Activated T-helper 1 cell treated with anti-CD3 and anti-CD28 coated beads, Interleukin-12 subunit alpha, Interleukin-12 subunit beta, Interleukin-2, Interleukin-4 antibody, amounts not matched to agents 30 ng/mL and 10 ng/mL and 1 ng/mL, durations not matched to agents 14 hours and 24 hours and 36 hours (primary cell): ENCODE measurements at regions of chr1 and their contacts with region 1.

Region 1: DNA sequence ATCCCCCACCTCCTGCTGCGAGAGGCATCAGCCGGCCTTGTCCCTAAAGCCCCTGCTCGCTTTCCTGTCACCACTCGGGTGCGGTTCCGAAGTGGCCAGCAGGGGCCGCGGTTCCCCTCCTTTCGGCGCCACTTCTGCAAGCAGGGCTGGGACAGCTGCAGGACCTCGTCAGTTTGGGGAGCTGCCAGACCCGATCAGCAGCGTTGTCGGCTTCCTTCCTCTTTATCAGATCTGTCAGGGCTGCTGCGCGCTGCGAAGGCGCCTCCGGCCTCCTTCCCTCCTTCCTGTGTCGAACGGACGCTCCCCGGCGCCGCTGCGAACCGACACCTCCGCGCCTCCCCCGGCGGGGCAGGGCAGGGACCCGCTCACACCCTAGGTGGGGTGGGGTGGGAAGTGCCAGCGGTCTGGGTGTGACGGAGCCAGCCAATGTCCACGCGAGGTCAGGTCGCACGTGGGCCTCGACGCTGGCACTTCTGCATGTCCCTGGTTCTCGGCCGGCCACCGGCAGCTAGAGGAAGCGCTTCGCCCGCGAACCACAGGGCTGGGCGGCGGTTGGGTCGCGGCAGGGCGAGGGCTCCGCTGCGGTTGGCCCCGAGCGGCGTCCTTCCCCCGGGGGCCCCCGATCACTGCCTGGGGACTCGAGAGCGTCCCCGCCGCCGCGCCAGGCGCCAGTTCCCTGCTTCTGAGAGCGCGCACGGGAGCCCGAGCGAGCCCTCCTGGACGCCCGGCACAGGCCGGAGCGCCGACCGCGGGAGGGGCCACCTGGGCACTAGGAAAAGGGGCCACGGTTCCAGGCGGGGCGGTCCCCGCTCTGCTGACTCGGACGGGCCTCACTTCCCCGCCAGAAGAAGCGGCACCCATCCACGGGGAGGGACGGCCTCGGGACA is 81.8 kb downstream of the RUNX3 start:
- DNase-seq: peak; percentile 85
- H3K4me3 Mint-ChIP-seq: peak overlapping the region; percentile 78
- H3K27ac Mint-ChIP-seq: no peak overlapping the region
- H3K4me1 Mint-ChIP-seq: peaks cover 15% of the 10 kb centered on the region
- H3K27me3 Mint-ChIP-seq: peaks cover 34% of the 10 kb centered on the region

Region 2: DNA sequence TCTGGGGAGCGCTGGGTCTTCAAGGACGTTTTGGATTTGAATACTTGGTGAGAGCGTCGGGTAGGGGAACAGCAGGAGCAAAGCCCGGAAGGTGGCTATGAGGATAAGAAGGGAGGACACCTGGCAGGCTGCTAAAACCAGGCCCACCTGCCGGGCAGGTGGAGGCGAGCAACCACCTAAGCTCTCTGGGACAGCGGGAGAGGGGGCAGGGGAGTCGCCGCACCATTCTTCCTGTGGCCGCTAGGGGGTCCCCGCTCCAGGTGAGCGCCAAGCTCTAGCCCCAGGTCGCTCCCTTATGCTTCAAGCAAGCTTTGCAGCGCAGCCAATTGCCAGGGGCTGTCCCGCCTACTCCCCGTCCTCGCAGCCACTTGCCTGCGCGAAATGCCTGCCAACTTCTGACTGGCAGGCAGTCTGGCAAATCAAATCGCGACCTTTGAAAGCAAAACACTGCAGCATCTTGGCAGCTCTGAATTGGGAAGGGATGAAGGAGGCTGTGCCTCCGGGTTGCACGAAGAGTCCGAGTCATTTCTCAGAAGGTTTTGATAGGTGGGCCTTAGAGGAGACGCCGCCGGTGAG is 432.8 kb before region 1 on chr1 and contains the start of gene NIPAL3:
- intact Hi-C with region 1: no loop called
- DNase-seq: peak; percentile 97
- H3K4me3 Mint-ChIP-seq: peak within 1 kb of the TSS; percentile 97
- H3K27ac Mint-ChIP-seq: peak within 1 kb of the TSS; percentile 78
- H3K4me1 Mint-ChIP-seq: peaks cover 51% of the 10 kb centered on the region
- H3K27me3 Mint-ChIP-seq: no peaks in the 10 kb centered on the region
- total RNA-seq, gene NIPAL3: 22.7 and 23.5 TPM in 2 replicates

Region 3: DNA sequence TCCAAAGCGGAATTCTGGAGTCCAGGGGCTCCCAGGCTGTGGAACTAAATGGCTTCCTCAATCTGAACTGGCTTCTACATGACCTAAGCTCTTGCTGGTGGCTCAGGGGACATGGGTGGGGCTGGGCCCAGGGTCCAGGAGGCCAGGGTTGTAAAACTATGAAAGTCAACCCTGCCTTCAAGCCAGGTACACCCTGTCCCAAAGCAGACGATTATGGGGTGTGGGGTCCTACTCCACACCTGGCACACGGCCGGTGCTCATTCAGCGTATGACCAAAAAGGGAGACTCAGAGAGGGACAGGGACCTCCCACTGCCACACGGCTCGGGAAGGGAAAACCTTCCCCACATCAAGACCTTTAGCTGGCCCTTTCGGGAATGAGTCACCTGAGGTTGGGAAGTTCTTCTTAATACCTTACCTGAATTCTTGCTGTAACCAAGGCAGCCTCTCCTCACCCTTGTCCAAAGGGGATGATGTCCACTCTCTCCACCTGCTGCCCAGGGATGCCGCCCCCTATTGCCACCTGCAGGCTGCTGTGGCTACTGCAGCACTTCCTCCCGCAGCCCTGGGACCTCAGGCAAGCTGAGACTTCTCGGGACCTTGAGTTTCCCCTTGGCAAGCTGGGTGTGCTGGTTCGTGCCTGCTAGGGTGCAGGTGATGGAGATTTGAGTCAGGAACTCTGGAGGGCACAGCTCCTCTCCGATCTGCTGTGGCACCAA is 49.7 kb after region 1 on chr1:
- intact Hi-C with region 1: loop called (anchors 1 kb)
- DNase-seq: peak; percentile 24
- H3K4me3 Mint-ChIP-seq: no peak overlapping the region
- H3K27ac Mint-ChIP-seq: no peak overlapping the region
- H3K4me1 Mint-ChIP-seq: no peaks in the 10 kb centered on the region
- H3K27me3 Mint-ChIP-seq: no peaks in the 10 kb centered on the region

Region 4: GRCh38 chr1:24923485-24924113 is 75.4 kb after region 1 on chr1:
- intact Hi-C with region 1: loop called (anchors 1 kb)
- DNase-seq: no peak
- H3K4me3 Mint-ChIP-seq: peak overlapping the region; percentile 45
- H3K27ac Mint-ChIP-seq: peak overlapping the region; percentile 71
- H3K4me1 Mint-ChIP-seq: peaks cover 78% of the 10 kb centered on the region
- H3K27me3 Mint-ChIP-seq: peaks cover 2% of the 10 kb centered on the region

Region 5: DNA sequence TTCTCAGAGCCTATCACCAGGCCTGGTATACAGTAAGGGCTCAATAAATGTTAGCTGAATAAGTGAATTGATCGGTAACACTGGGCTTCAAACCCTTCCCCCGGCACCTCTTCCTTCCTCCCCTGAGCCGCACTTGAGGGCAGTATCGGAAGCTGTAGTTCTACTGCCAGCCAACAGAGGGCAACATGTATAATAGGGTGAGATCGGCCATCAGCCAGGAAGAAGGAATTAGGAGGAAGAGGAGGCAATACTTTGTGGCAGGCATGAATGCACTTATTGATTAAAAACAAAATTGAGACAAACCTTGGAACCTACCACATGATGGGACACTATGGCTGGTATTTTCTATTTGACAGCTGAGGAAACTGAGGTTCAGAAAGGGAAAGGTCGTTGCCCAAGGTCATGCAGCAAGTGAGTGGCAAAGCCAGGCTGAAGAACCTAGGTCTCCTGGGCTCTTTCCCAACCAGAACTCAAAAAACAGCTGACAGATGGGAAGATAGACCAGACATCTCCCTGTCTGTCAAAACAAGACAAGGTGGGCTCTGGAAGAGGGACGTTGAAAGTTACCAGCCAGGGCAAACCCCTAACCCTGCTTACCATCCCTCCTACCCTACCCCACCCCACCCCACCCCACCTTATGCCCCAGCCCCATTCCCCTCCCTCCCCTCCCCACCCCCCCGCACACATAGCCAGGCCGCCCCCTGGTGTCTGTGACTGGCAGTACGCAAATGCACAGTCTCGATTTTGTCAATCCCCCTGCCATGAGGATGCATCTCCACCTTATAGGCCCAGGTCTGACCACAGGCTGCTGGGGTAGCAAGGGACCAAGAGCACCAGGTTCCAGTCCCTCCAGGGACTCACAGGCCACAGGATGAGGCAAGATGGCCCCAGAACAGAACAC is 189.2 kb after region 1 on chr1:
- intact Hi-C with region 1: loop called (anchors 1 kb)
- DNase-seq: peak; percentile 50
- H3K4me3 Mint-ChIP-seq: no peak overlapping the region
- H3K27ac Mint-ChIP-seq: peak overlapping the region; percentile 4
- H3K4me1 Mint-ChIP-seq: peaks cover 32% of the 10 kb centered on the region
- H3K27me3 Mint-ChIP-seq: peaks cover 7% of the 10 kb centered on the region

Region 6: DNA sequence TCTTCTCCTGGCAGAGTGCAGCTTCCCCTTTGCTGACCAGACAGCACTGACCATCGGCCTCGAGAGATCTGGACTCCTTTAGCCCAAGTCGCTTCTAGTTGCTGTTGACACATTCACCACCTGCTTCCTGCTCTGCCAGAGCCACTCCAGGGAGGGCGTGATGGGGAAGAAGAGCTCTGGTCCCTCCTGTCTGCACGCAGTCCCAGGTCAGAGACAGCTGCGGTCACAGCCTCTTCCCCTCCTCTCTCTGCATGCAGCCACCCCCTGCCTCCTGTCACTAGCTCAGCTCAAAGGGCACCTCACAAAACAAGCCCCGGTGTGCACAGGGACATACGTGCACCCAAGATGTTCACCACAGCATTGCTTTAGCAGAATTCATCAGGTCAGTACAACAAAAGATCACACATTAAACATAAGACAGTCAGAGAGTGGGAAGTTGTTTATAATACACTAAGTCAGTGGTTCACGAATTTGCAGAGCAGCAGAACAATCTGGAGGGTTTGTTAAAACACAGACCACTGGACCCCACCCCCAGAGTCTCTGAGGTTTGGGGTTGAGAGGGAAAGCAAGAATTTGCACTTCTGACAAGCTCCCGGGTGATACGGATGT is 251.2 kb after region 1 on chr1:
- intact Hi-C with region 1: loop called (anchors 1 kb)
- DNase-seq: peak; percentile 37
- H3K4me3 Mint-ChIP-seq: peak overlapping the region; percentile 68
- H3K27ac Mint-ChIP-seq: peak overlapping the region; percentile 88
- H3K4me1 Mint-ChIP-seq: peaks cover 84% of the 10 kb centered on the region
- H3K27me3 Mint-ChIP-seq: peaks cover 2% of the 10 kb centered on the region

Region 7: DNA sequence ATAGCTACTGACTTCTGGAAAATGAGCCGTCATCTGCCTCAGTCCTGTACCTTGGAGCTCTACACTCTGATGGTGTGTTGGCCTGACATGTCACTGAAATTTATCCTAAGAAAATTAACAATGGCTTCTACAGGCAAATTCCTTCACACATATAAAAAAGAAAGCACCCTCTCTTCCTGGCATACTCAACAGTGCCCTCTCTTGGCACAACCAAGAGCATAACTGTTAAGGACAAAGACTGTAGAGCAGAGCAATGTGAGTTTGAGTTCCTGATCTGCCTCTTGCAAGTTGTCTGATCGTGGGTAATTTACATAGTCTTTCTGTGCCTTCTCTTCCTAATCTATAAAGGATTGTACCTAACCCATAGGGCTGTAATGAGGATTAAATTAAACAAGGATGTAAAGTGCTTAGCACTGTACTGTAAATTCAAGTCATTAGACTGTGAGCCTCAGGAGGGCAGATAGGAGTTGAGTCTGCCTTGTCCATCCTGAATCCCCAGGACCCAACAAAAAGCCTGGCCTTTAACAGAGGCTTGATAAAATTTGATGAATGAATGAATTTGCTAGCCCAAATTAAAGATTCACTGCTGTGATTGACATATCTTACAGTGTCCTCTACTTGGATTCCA is 300.5 kb after region 1 on chr1:
- intact Hi-C with region 1: loop called (anchors 1 kb)
- DNase-seq: peak; percentile 29
- H3K4me3 Mint-ChIP-seq: no peak overlapping the region
- H3K27ac Mint-ChIP-seq: no peak overlapping the region
- H3K4me1 Mint-ChIP-seq: peaks cover 9% of the 10 kb centered on the region
- H3K27me3 Mint-ChIP-seq: peaks cover 38% of the 10 kb centered on the region

Region 8: GRCh38 chr1:25204797-25205480 is 356.7 kb after region 1 on chr1:
- intact Hi-C with region 1: loop called (anchors 1 kb)
- DNase-seq: no peak
- H3K4me3 Mint-ChIP-seq: no peak overlapping the region
- H3K27ac Mint-ChIP-seq: no peak overlapping the region
- H3K4me1 Mint-ChIP-seq: no peaks in the 10 kb centered on the region
- H3K27me3 Mint-ChIP-seq: peaks cover 26% of the 10 kb centered on the region